ENCODE measurements at regions of chr3 and their contacts with region 1.

Region 1: DNA sequence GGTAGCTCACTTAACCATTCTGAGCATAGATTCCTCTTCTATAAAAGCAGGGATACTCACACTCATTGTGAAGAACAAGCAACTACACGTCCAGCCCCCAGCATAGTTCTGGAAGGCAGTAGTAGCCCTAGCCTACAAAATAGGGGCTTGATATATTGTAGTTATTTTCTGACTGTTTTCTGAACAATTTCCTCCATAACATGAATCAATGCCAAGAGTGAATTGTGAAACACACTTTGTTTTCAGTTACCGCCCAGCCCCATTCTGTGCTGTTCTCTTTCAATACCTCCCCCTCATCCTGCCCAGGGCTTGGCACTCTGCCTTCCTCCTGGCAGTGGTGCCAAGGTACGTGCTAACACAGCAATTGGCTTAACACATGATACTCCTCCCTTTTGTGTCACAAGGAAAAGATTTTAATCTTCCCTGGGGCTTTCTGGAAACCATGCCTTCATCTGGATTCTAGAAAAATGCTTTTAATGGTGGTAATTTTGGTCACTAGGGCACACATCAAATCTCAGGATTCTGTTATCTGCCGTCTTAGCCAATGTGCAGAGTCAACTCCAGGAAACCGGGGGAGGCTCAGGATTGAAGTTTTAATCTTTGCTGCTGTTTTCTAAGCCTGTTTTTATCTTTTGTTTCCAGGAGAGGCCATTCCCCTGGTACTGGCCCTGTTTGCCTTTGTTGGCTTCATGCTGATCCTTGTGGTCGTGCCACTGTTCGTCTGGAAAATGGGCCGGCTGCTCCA is 37.2 kb downstream of the IL20RB start:
- DNase-seq: peak; percentile 89
- ATAC-seq: peak; percentile 92

Region 2: GRCh38 chr3:136861890-136862616 is 132.9 kb before region 1 on chr3 and contains the start of gene NCK1:
- intact Hi-C with region 1: loop called (anchors 10 kb)
- DNase-seq: peak; percentile 100
- ATAC-seq: peak; percentile 99
- total RNA-seq, gene NCK1: 25.0 TPM

Region 3: DNA sequence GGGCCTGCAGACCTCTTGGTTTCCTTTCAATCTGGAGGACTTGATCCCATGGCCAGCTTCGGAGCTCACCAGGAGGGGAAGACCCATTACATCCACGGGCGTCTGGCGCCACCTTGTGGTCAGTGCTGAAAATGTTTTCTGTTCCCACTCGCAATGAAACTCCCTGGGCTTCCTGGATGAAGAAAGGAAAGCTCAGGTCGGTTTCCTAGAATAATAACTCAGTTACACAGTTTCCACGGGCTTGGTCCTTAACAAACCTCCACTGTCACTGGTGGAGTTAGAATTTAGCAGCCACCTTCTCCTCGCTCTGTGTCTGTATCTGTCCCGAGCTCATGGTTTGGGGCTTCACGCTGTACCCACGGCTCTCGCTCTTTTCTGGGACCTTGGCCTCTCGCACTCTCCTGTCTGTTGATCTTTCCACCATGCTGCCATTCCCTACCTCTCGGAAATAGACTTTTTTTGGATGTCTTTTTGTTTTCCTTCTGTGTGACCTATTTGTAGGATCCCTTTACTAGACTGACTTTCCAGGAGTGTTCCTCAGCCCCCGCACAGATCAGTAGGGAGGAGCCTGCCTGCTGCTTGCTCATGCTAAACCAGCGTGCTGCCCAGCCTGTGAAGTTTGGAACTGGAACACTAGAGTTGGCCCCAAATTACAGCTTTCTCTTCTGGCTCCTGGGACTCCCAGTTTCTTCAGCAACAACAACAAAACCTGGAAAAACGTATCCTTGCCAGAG is 19.2 kb after region 1 on chr3:
- intact Hi-C with region 1: no loop called
- DNase-seq: peak; percentile 93
- ATAC-seq: peak; percentile 95

Region 4: GRCh38 chr3:137205394-137206045 is 210.6 kb after region 1 on chr3:
- intact Hi-C with region 1: no loop called
- DNase-seq: no peak
- ATAC-seq: no peak

Region 5: GRCh38 chr3:137231126-137231525 is 236.2 kb after region 1 on chr3:
- intact Hi-C with region 1: no loop called
- DNase-seq: no peak
- ATAC-seq: no peak